WTC11 (cell line): ENCODE measurements at regions of chr3 and their contacts with region 1.

Region 1: DNA sequence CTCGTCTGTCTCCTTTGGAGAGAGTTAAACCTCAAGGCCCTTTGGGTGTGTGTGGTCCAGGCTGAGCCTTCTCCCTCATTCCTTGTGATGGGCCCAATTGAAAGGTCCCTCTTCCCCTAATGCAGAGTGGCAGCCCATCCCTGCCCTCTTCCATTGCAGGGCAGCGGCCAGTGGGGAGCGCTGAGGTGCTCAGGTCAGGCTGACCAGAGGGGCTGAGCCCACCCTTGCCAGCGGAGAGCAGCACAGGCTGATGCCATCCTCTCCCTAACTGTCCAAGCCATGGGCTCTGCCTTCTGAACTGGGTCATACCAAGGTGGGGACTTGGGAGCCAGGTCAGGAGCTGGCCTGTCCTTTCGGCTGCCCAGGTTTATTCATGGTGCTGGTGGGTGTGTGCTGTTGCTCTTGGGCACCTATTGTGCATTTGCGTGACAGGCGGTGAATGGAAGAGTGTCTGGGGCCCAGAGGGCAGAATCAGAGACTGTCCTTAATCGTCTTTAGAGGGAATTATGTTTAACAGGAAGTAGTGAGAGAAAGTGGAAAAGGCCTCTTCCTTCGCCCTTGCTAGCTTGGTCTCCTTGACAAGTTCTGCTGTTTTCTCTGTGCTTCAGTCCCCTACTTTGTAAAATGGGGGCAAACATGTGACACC is 96.9 kb downstream of the VGLL4 start:
- DNase-seq: no peak
- ATAC-seq: no peak
- H3K4me3 Mint-ChIP-seq: no peak overlapping the region
- H3K27ac Mint-ChIP-seq: no peak overlapping the region
- H3K4me1 Mint-ChIP-seq: no peaks in the 10 kb centered on the region
- H3K27me3 Mint-ChIP-seq: no peaks in the 10 kb centered on the region; the same call in 1 of the 2 replicates
- CTCF ChIP-seq: no peak

Region 2: GRCh38 chr3:11236595-11237461 is 310.0 kb before region 1 on chr3:
- CTCF ChIA-PET with region 1: no interaction called
- POLR2A ChIA-PET with region 1: no interaction called
- DNase-seq: peak; percentile 92
- ATAC-seq: peak; percentile 89
- H3K4me3 Mint-ChIP-seq: no peak overlapping the region
- H3K27ac Mint-ChIP-seq: no peak overlapping the region
- H3K4me1 Mint-ChIP-seq: peaks cover 6% of the 10 kb centered on the region
- H3K27me3 Mint-ChIP-seq: no peaks in the 10 kb centered on the region; the same call in 1 of the 2 replicates
- CTCF ChIP-seq: peak; percentile 80

Region 3: DNA sequence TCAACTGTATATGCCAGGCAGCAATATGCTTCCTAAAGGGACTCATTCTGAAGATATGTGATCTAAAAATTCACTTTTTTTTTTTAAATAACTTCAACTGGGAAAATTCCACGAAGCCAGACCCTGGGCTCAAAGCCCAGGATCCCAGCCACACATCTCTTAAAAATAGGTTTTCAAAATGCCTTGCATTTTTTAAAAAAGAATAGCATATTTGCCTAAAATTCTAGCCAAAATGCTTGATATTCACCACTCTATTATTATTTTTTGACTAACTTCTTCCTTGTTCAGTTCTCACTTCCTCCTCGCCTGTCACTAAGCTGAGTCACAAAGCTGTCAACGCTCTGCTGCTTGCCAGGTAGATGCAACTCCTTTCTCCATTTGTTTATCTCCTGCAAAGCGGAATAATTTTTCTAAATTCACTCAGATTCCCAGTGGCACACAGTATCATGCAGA is 124.9 kb after region 1 on chr3:
- CTCF ChIA-PET with region 1: no interaction called
- POLR2A ChIA-PET with region 1: no interaction called
- DNase-seq: no peak
- ATAC-seq: no peak
- H3K4me3 Mint-ChIP-seq: no peak overlapping the region
- H3K27ac Mint-ChIP-seq: no peak overlapping the region
- H3K4me1 Mint-ChIP-seq: peaks cover 16% of the 10 kb centered on the region
- H3K27me3 Mint-ChIP-seq: no peaks in the 10 kb centered on the region
- CTCF ChIP-seq: no peak

Region 4: DNA sequence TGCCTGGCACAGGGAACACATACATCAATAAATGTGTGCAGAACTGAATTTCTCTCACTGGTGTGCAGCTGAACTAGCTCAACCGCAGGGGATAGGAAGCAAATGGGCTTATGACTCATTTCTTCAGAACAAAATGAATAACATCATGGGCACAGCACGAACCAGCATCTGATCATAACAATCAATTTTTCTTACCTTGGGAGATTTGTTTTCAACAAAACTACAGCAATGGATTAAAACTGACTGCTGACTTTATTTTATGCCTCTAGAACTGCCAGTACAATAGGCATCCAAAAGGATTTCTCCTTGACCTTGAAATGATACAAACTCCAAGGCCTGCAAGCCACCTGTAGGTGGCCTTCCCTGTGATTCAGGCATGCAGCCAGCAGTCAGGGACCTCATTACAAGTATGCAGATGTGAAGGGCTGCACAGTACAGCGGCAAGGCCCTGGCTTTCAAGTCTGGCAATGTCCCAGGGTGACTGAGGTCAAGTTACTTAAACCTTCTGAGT is 273.8 kb after region 1 on chr3:
- CTCF ChIA-PET with region 1: no interaction called
- POLR2A ChIA-PET with region 1: interaction called, 10 read pairs
- DNase-seq: no peak
- ATAC-seq: peak; percentile 47
- H3K4me3 Mint-ChIP-seq: no peak overlapping the region
- H3K27ac Mint-ChIP-seq: peak overlapping the region; percentile 4; the same call in 1 of the 2 replicates
- H3K4me1 Mint-ChIP-seq: no peaks in the 10 kb centered on the region
- H3K27me3 Mint-ChIP-seq: no peaks in the 10 kb centered on the region
- CTCF ChIP-seq: no peak